Sigmoid colon (tissue), 7 donors: ENCODE measurements at regions of chr11 and their contacts with region 1.

Region 1: DNA sequence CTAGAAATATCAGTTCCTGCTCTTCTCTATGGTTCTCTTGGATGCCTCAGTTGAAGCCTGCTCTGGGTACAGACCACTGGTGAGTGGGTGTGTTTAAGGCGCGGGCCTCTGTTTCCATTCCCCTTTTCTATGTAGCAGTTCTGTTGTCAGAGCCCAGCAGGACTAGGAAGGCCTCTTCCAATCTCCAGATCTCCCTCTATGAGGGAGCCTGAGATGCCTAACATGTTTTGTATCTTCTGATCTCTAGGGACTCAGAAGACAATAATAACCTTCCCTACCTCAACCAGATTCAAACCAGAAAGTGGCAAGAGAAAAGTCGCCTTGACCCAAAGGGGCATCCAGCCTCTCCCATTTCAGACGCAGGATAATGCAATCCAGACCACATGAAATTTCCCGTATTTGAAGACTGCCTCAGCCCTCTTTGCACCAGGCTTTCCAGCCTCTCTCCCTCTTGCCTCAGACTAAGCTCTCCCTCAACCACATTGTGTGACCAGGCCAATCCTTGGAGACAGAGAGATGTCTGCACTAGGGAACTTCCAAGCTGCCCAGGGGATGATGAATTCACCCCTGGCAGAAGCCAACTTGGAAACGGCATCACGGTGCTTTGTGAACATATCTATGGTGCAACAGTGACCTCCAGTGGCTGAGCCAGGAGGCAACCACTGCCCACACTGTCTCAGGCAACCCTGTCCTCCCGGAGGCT is 150.1 kb upstream of the UBASH3B start:
- DNase-seq: peak; percentile 92
- H3K4me3 ChIP-seq: no peak overlapping the region
- H3K27ac ChIP-seq: peak overlapping the region in 1 of 4 donors; percentile 7
- H3K4me1 ChIP-seq: peaks cover 0 to 5% (median 2%) of the 10 kb centered on the region in 4 donors
- H3K27me3 ChIP-seq: no peaks in the 10 kb centered on the region
- CTCF ChIP-seq: peak; percentile 70 to 81 (median 78)
- EP300 ChIP-seq: no peak
- POLR2A ChIP-seq: no peak

Region 2: GRCh38 chr11:122020902-122021301 is 484.6 kb before region 1 on chr11:
- intact Hi-C with region 1: loop called (anchors 2 kb)
- DNase-seq: no peak
- H3K4me3 ChIP-seq: no peak overlapping the region
- H3K27ac ChIP-seq: no peak overlapping the region
- H3K4me1 ChIP-seq: no peaks in the 10 kb centered on the region
- H3K27me3 ChIP-seq: no peaks in the 10 kb centered on the region
- CTCF ChIP-seq: peak in 2 of 4 experiments; percentile 29 to 49
- EP300 ChIP-seq: no peak
- POLR2A ChIP-seq: no peak

Region 3: DNA sequence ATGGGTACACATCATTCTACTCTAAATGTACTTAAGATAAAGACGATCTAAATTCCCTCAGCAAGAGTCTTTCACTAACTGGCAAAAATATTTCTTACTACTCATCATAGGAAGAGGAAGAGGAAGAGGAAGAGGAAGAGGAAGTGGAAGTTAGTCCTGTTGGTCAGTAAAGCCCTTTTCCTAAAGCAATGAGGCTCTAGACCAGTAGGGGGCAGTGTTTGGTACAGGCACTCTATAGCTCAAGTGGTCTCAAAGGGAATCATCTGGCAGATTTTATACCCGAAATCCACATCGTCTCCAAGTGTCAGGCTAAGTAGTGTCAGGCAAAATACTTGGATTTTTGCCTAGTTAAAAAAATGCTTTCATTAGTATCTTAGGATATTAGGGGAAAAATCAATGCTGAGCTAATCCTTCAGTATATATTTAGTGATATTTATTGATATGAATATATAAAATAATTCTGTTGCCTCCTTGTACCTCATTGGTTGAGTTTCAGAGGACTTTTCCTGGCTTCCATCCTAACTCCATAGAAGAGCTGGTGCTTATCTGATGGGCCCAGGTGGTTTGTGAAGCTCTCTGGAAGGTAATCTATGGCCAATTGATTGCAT is 397.2 kb before region 1 on chr11:
- intact Hi-C with region 1: loop called (anchors 5 kb)
- DNase-seq: no peak
- H3K4me3 ChIP-seq: no peak overlapping the region
- H3K27ac ChIP-seq: no peak overlapping the region
- H3K4me1 ChIP-seq: no peaks in the 10 kb centered on the region
- H3K27me3 ChIP-seq: no peaks in the 10 kb centered on the region
- CTCF ChIP-seq: peak in 3 of 4 experiments; percentile 13 to 46 (median 21)
- EP300 ChIP-seq: no peak
- POLR2A ChIP-seq: no peak

Region 4: DNA sequence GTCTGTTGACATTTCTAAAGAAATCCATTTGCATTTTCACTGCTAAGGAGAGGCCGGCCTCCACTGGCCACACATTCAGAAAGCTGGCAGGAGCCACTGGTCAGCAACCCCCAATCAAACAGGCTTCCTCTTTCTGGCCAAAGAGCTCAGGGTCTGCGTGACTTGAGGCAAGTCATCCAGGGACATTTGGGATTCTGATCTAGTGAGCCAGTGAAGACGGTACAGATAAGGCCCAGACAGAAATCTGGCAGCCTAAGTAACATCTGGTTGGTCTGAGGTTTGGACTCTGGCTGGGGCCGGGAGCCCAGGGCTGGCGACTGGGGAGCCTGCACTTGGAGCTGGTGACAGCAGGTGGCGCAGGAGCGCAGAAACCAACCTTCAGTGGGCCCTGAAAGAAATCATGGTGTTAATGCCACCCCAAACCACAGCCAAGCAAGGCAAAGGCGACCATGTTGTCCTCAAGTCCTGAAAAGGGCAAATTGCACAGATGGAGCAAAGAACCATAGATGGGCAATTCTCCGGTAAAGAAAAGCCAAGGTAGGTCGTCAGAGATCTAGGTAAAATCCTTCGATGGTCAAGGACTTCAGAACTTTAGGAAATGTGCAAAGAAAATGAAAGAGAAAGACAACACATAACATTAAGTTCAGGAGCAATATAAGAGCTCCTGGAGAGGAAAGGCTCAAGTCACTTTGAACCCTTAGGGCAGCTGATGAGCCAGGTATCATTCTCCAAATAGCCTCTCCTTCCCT is 290.0 kb before region 1 on chr11:
- intact Hi-C with region 1: loop called (anchors 1 kb)
- DNase-seq: peak; percentile 83
- H3K4me3 ChIP-seq: no peak overlapping the region
- H3K27ac ChIP-seq: peak overlapping the region in 1 of 4 donors; percentile 35
- H3K4me1 ChIP-seq: peaks cover 0 to 20% (median 8%) of the 10 kb centered on the region in 4 donors
- H3K27me3 ChIP-seq: no peaks in the 10 kb centered on the region
- CTCF ChIP-seq: peak; percentile 71 to 90 (median 78)
- EP300 ChIP-seq: no peak
- POLR2A ChIP-seq: no peak

Region 5: DNA sequence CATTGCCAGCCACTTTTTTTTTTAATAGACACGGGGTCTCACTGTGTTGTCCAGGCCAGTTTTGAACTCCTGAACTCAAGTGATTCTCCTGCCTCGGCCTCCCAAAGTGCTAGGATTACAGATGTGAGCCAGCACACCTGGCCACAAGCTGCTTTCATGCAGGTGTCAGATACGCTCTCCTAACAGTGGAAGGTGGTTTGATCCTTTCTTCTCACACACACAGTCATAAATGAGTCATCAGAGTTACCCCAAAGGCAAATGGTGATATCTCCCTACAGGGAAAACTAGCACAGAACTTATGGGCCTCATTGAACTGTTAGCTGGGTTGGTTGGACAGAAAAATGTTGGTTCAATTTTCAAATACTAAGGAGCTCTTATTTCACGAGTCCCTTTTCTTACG is 111.8 kb after region 1 on chr11:
- intact Hi-C with region 1: no loop called
- DNase-seq: no peak
- H3K4me3 ChIP-seq: no peak overlapping the region
- H3K27ac ChIP-seq: no peak overlapping the region
- H3K4me1 ChIP-seq: no peaks in the 10 kb centered on the region
- H3K27me3 ChIP-seq: no peaks in the 10 kb centered on the region
- CTCF ChIP-seq: no peak
- EP300 ChIP-seq: no peak
- POLR2A ChIP-seq: no peak